ENCODE measurements at regions of chr4 and their contacts with region 1.

Region 1: GRCh38 chr4:47499700-47500099 is 14.6 kb downstream of the ATP10D start:
- DNase-seq: peak in 2 of 3 donors; percentile 50 to 62
- H3K4me3 ChIP-seq: peak overlapping the region in 3 of 7 experiments; percentile 1 to 46 (median 15)
- H3K27ac ChIP-seq: peak overlapping the region in 1 of 2 experiments; percentile 37
- H3K4me1 ChIP-seq: peaks cover 8 to 20% (median 19%) of the 10 kb centered on the region in 4 experiments
- H3K27me3 ChIP-seq: no peaks in the 10 kb centered on the region

Region 2: DNA sequence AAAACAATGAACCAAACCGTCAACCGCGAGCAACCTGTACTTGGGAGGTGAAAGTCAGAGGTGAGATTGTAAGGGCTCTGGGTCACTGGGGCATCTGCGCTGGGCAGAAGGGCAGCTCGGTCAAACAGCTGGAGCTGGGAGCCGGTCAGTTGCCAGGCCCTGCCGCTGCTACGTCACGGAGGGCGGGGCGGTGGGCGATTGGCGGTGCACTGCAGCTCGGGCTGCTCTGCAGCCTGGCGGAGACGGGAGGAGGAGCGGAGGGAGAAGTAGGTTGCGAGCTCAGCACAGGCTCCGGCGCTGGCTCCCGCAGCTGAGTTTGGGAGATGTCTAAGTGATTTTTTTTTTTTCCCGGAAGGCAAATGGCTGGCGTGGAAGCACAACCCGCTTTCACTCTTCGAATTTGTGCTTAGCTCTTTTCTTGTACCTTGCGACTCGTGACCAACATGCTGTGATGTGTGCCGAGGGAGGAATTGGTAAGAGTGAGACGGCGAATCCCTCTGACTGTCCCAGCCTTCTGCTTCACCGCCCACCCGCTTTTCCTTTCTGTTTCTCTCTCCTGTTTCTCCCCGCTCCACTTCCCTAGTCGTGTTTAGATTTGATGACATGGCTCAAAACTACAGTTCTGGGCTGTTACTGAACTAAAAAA is 14.5 kb before region 1 on chr4 and contains the start of gene ATP10D:
- CTCF ChIA-PET with region 1: interaction called, 10 read pairs
- POLR2A ChIA-PET with region 1: no interaction called
- DNase-seq: peak; percentile 84 to 91 (median 90)
- H3K4me3 ChIP-seq: peak within 1 kb of the TSS; percentile 49 to 99 (median 93)
- H3K27ac ChIP-seq: peak within 1 kb of the TSS; percentile 72 to 88
- H3K4me1 ChIP-seq: peaks cover 8 to 19% (median 14%) of the 10 kb centered on the region in 4 experiments
- H3K27me3 ChIP-seq: no peaks in the 10 kb centered on the region

Region 3: DNA sequence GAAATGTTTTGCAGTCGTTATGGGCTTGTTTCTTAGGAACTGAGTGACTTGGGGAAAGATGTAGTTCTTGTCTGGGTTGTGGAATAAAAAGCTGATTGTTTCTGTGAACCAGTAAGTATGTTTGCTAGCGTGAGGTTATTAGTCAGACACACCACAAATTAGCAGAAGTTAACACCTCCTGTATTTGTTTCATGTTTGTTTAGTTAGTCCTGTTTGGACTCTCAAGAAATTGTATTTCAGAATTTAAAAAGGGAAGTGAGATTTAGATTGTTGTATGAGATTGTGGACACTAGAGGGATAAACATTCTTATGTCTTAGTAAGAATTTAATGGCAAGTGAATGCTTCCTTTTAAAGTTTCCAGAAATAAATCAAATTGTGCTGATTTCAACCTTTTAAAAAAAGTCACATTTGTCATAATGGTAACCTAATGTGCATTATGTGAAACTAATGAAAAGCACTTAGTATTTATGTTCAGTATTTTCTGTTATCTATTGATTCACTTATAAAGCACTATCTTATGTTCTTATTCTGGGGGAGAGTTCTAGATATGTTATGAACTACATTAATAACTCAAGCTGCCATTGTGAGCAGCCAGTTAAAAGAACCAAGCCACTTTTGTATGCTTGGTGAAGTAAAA is 10.9 kb after region 1 on chr4:
- CTCF ChIA-PET with region 1: interaction called, 12 read pairs
- POLR2A ChIA-PET with region 1: no interaction called
- DNase-seq: peak; percentile 41 to 86 (median 85)
- H3K4me3 ChIP-seq: no peak overlapping the region
- H3K27ac ChIP-seq: peak overlapping the region in 1 of 2 experiments; percentile 45
- H3K4me1 ChIP-seq: peaks cover 0 to 11% (median 6%) of the 10 kb centered on the region in 4 experiments
- H3K27me3 ChIP-seq: no peaks in the 10 kb centered on the region

Region 4: GRCh38 chr4:47891928-47892327 is 392.2 kb after region 1 on chr4:
- CTCF ChIA-PET with region 1: no interaction called
- POLR2A ChIA-PET with region 1: no interaction called
- DNase-seq: no peak
- H3K4me3 ChIP-seq: no peak overlapping the region
- H3K27ac ChIP-seq: no peak overlapping the region
- H3K4me1 ChIP-seq: no peaks in the 10 kb centered on the region
- H3K27me3 ChIP-seq: no peaks in the 10 kb centered on the region